GM12878 (cell line): ENCODE measurements at regions of chr5 and their contacts with region 1.

Region 1: DNA sequence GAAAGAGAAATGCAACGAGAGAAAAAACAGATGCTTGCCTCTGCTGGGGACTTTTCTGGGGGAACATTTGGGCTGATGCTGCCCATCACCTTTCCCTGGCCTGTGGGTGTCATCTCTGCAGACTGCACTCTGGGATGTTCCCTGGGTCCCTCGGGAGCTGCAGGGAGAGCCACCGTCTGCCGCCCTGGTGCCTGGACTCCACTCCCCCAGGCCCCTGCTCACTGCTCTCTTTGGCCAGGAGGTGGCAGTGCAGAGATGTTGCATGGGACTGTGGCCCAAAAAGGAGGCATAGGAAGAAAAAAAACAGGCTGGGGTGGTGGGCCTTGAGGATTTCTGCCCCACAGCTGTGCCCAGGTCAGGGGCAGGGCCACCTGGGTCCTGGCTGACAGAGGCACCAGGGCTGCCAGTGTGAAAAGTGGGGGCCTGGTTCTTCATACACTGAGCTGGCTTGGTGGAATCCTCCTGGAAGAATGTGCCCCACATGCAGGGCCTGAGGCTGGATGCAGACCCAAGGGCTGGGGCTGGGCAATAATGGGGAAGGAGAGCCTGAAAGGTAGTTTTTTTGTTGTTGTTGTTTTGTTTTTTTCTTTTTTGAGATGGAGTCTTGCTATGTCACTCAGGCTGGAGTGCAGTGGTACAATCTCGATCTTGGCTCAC is 353.6 kb downstream of the SLIT3 start:
- DNase-seq: no peak
- ATAC-seq: peak; percentile 89
- H3K4me3 ChIP-seq: no peak overlapping the region
- H3K27ac ChIP-seq: no peak overlapping the region
- H3K4me1 ChIP-seq: no peaks in the 10 kb centered on the region
- H3K27me3 ChIP-seq: no peaks in the 10 kb centered on the region
- CTCF ChIP-seq: peak; percentile 74 to 90 (median 84)
- EP300 ChIP-seq: no peak
- POLR2A ChIP-seq: no peak
- RAD21 ChIP-seq: peak; percentile 74

Region 2: DNA sequence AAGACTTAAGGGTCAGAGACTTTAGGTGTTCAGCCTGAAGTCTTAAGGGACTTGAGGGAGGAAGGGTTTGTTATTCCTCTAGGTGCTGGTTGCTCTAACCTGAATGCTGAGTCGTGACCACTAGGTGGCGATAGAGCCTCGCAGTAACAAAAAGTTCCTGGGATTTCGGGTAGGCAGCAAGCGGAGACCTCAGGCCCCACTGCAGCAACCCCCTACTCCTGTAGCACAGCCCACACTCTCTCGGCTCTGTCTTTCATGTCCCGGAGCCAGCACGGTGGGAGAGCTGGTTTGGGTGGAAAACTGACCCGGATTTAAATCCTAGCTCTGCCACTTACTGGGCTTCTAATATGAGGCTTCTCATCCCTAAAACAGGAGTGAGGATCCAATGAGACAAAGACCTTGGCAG is 267.8 kb before region 1 on chr5:
- CTCF ChIA-PET with region 1: no interaction called
- POLR2A ChIA-PET with region 1: no interaction called
- RAD21 ChIA-PET with region 1: no interaction called
- SMC1A ChIA-PET with region 1: no interaction called
- in situ Hi-C with region 1: no loop called
- intact Hi-C with region 1: loop called (anchors 1 kb)
- DNase-seq: peak; percentile 16
- ATAC-seq: peak; percentile 88
- H3K4me3 ChIP-seq: no peak overlapping the region
- H3K27ac ChIP-seq: no peak overlapping the region
- H3K4me1 ChIP-seq: no peaks in the 10 kb centered on the region
- H3K27me3 ChIP-seq: no peaks in the 10 kb centered on the region; a peak in 1 of 4 replicates
- CTCF ChIP-seq: peak; percentile 78 to 91 (median 83)
- EP300 ChIP-seq: no peak
- POLR2A ChIP-seq: no peak
- RAD21 ChIP-seq: peak; percentile 86

Region 3: GRCh38 chr5:168706655-168707069 is 240.7 kb before region 1 on chr5:
- CTCF ChIA-PET with region 1: interaction called, 3 read pairs
- POLR2A ChIA-PET with region 1: no interaction called
- RAD21 ChIA-PET with region 1: no interaction called
- SMC1A ChIA-PET with region 1: no interaction called
- in situ Hi-C with region 1: no loop called
- intact Hi-C with region 1: loop called (anchors 10 kb)
- DNase-seq: no peak
- ATAC-seq: peak; percentile 73
- H3K4me3 ChIP-seq: no peak overlapping the region
- H3K27ac ChIP-seq: no peak overlapping the region
- H3K4me1 ChIP-seq: no peaks in the 10 kb centered on the region
- H3K27me3 ChIP-seq: peaks cover 0 to 4% of the 10 kb centered on the region in 2 experiments; a peak in 1 of 4 replicates
- CTCF ChIP-seq: peak; percentile 42 to 68 (median 62); a peak in 5 of 6 replicates
- EP300 ChIP-seq: no peak
- POLR2A ChIP-seq: no peak
- RAD21 ChIP-seq: peak; percentile 60

Region 4: DNA sequence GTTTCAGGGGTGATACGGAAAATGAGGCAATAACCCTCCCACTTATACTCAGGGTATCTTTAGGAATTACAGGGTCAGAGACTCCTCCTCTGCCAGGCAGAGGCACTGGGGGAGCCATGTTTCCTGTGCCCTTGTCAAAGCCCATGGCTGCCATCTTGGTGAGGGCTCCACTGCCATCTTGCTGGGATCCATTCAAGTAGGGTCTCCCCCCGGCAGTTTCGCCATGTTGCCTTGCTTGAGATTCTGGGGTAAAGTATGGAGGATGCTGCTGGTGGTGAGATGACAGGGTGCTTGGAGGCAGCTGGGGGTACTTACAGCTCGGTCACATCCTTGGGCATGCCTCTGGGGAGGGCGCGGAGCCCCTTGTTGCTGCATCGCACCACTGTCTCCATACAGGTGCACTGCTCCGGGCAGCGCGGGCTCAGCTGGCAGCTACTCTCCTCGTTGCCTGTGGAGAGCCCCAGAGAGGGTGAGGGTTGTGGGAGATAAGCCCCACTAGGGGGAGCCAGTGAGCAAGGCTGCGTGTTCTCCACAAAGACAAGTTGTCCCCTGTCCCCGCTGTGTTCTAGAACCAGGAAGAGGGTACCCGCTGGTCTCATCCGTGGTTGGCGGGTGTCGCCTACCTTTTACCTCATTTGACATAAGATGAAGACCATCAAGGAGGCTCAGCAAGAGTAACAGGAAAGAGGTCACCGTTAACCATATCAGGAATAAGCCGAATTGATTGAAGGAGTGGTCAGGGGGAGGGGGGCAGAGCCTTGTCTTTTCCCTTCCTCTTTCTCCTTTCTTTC is 199.2 kb before region 1 on chr5:
- CTCF ChIA-PET with region 1: no interaction called
- POLR2A ChIA-PET with region 1: no interaction called
- RAD21 ChIA-PET with region 1: no interaction called
- SMC1A ChIA-PET with region 1: interaction called, 3 read pairs
- in situ Hi-C with region 1: no loop called
- intact Hi-C with region 1: loop called (anchors 1 kb)
- DNase-seq: no peak
- ATAC-seq: peak; percentile 95
- H3K4me3 ChIP-seq: no peak overlapping the region
- H3K27ac ChIP-seq: no peak overlapping the region
- H3K4me1 ChIP-seq: no peaks in the 10 kb centered on the region
- H3K27me3 ChIP-seq: no peaks in the 10 kb centered on the region; a peak in 1 of 4 replicates
- CTCF ChIP-seq: peak; percentile 60 to 90 (median 80)
- EP300 ChIP-seq: no peak
- POLR2A ChIP-seq: no peak
- RAD21 ChIP-seq: peak; percentile 36